Caco-2 (cell line): ENCODE measurements at regions of chr3 and their contacts with region 1.

Region 1: DNA sequence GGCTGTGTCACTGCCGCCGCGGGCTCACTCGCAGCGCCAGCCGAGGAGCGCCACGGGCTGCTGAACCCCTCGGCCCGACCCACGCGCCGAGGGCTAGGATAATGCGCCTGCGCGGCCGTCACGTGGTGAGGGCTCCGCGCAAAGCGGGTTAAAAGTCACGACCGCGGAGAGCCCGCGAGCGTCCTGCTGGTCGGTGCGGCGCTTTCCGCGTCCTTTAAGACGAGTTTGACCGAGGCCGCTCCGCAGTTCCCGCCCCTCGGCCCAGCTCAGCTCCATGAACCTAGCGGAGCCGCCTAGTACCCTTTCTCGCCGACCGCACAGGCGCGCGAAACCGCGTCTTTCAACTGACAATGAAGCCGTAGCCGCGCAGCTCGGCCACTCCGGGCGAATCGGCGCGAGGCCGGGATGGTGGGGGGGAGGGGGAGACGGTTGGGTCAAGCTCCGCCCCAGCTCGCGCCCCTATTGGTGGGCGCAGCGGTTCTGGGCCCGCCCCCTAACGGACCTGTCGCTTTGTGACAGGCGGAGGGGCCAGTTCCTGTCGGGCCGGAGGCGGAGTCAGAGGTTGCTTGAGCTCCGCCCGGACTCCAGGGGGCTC is 636 bp upstream of the STT3B start:
- DNase-seq: peak; percentile 99
- H3K4me3 ChIP-seq: peak overlapping the region; percentile 97
- H3K4me3 Mint-ChIP-seq: peak overlapping the region; percentile 89
- H3K27ac Mint-ChIP-seq: peak overlapping the region; percentile 98
- H3K4me1 ChIP-seq: peaks cover 19% of the 10 kb centered on the region
- H3K4me1 Mint-ChIP-seq: peaks cover 12% of the 10 kb centered on the region
- H3K27me3 ChIP-seq: no peaks in the 10 kb centered on the region
- H3K27me3 Mint-ChIP-seq: no peaks in the 10 kb centered on the region
- CTCF ChIP-seq: no peak

Region 2: GRCh38 chr3:31485196-31485595 is 46.9 kb before region 1 on chr3:
- CTCF ChIA-PET with region 1: no interaction called
- POLR2A ChIA-PET with region 1: no interaction called
- intact Hi-C with region 1: loop called (anchors 5 kb)
- DNase-seq: no peak
- H3K4me3 ChIP-seq: no peak overlapping the region
- H3K4me3 Mint-ChIP-seq: no peak overlapping the region
- H3K27ac Mint-ChIP-seq: no peak overlapping the region
- H3K4me1 ChIP-seq: peaks cover 22% of the 10 kb centered on the region
- H3K4me1 Mint-ChIP-seq: peaks cover 25% of the 10 kb centered on the region
- H3K27me3 ChIP-seq: no peaks in the 10 kb centered on the region
- H3K27me3 Mint-ChIP-seq: no peaks in the 10 kb centered on the region
- CTCF ChIP-seq: no peak